Colonic mucosa (tissue), 4 donors: ENCODE measurements at regions of chr5 and their contacts with region 1.

Region 1: DNA sequence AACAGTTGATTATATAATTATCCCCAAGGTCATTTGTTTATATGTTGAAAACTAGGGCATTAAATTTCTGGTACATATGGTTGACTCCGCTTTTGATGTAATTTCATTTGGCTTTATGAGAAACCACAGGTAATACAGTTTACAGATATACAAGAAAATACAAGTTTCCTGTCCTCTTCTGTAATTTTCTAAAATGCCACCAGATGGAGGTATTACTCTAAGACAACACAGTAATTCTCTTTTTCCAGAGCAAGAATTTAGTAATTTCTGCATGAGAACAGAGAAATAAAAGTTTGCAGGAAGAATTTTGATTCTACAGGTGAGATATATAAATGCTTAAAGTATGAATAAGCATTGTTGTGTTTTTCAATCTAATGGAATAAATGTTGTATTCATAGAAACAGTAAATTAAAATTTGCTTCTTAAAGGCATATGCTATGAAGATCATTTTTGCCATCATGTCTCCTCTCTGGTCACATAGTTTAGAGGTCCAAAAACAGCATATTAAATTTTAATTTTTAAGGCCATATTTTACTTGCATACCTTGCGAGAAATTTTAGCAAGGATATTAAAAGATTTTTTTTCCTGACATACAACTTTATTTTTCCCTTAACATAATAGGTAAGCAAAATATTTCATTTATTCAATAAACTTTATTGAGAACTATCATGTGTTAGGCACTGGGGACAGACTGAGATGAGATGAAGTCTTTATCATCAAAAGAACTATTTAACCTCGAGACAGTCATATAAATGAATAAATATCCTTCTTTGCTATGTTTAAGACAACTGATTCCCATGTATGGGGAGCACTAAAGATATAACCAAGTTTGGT is 22.7 kb downstream of the CHD1 start:
- DNase-seq: no peak
- H3K4me3 ChIP-seq: no peak overlapping the region
- H3K27ac ChIP-seq: no peak overlapping the region
- H3K4me1 ChIP-seq: no peaks in the 10 kb centered on the region
- H3K27me3 ChIP-seq: no peaks in the 10 kb centered on the region
- CTCF ChIP-seq: peak; percentile 59

Region 2: GRCh38 chr5:98193921-98194760 is 711.9 kb before region 1 on chr5:
- intact Hi-C with region 1: no loop called
- DNase-seq: no peak
- H3K4me3 ChIP-seq: no peak overlapping the region
- H3K27ac ChIP-seq: no peak overlapping the region
- H3K4me1 ChIP-seq: no peaks in the 10 kb centered on the region
- H3K27me3 ChIP-seq: no peaks in the 10 kb centered on the region
- CTCF ChIP-seq: no peak

Region 3: DNA sequence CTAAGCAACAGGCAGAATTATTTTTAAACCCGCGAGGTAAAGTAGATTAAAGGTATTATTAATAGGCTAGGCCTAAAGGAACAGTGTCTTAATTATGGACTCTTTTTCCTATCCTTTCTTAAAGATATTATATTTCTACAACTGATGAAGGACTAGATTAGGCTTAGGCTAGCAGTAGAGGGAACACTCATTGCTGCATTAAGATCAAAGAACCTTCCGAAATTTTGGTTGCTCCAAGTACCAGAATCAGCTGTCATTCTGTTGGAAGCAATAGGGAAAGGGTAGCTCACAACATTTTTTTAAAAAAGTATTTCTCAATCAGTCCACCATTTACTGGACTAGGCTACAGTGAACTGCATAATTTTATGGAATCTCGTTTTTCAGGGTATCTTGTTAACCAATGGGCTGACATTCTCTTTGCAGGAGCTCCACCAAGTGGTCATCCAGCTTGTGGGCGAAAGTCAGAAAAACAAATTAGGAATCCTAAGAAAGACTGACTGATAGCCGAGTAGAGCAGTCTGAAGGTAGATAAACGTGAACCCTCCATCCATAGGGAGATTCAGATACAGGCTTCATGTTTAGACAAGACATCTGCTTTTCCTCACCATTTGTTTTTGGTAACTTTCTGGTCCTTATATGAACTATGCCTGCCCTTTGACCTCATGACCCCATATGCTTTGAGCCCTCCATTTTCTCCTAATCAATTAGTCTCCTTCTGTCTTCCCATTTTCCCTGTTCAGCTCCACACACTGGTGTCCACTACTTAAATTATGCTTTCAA is 126.3 kb after region 1 on chr5:
- intact Hi-C with region 1: loop called (anchors 5 kb)
- DNase-seq: peak; percentile 83
- H3K4me3 ChIP-seq: no peak overlapping the region
- H3K27ac ChIP-seq: peak overlapping the region; percentile 76
- H3K4me1 ChIP-seq: peaks cover 7% of the 10 kb centered on the region
- H3K27me3 ChIP-seq: no peaks in the 10 kb centered on the region
- CTCF ChIP-seq: peak; percentile 69

Region 4: GRCh38 chr5:99060306-99061261 is 154.5 kb after region 1 on chr5:
- intact Hi-C with region 1: loop called (anchors 5 kb)
- DNase-seq: peak; percentile 90
- H3K4me3 ChIP-seq: no peak overlapping the region
- H3K27ac ChIP-seq: no peak overlapping the region
- H3K4me1 ChIP-seq: no peaks in the 10 kb centered on the region
- H3K27me3 ChIP-seq: no peaks in the 10 kb centered on the region
- CTCF ChIP-seq: peak; percentile 97